Dendritic cell treated with granulocyte-macrophage colony-stimulating factor and Interleukin-4, amounts not matched to agents 40 ng/mL and 50 ng/mL, for 4 days (primary cell): ENCODE measurements at regions of chr3 and their contacts with region 1.

Region 1: GRCh38 chr3:159929435-159930141 is 59.0 kb upstream of the IL12A start:
- H3K4me3 Mint-ChIP-seq: peak overlapping the region; percentile 32
- H3K27ac Mint-ChIP-seq: peak overlapping the region; percentile 81
- H3K4me1 Mint-ChIP-seq: peaks cover 37% of the 10 kb centered on the region
- H3K27me3 Mint-ChIP-seq: no peaks in the 10 kb centered on the region

Region 2: GRCh38 chr3:159910991-159911663 is 18.5 kb before region 1 on chr3:
- intact Hi-C with region 1: no loop called
- H3K4me3 Mint-ChIP-seq: peak overlapping the region; percentile 51
- H3K27ac Mint-ChIP-seq: peak overlapping the region; percentile 75
- H3K4me1 Mint-ChIP-seq: peaks cover 35% of the 10 kb centered on the region
- H3K27me3 Mint-ChIP-seq: no peaks in the 10 kb centered on the region

Region 3: GRCh38 chr3:159988617-159989271 is 59.2 kb after region 1 on chr3 and contains the start of gene IL12A:
- intact Hi-C with region 1: loop called (anchors 5 kb)
- H3K4me3 Mint-ChIP-seq: peak within 1 kb of the TSS; percentile 89
- H3K27ac Mint-ChIP-seq: peak within 1 kb of the TSS; percentile 28
- H3K4me1 Mint-ChIP-seq: peaks cover 19% of the 10 kb centered on the region
- H3K27me3 Mint-ChIP-seq: peaks cover 17% of the 10 kb centered on the region

Region 4: GRCh38 chr3:160598865-160599264 is 669.3 kb after region 1 on chr3:
- intact Hi-C with region 1: no loop called
- H3K4me3 Mint-ChIP-seq: no peak overlapping the region
- H3K27ac Mint-ChIP-seq: no peak overlapping the region
- H3K4me1 Mint-ChIP-seq: no peaks in the 10 kb centered on the region
- H3K27me3 Mint-ChIP-seq: no peaks in the 10 kb centered on the region